Thyroid gland (tissue), 4 donors: ENCODE measurements at regions of chrX and their contacts with region 1.

Region 1: GRCh38 chrX:72540318-72540717 is 32.3 kb downstream of the HDAC8 start:
- DNase-seq: no peak
- H3K4me3 ChIP-seq: no peak overlapping the region
- H3K27ac ChIP-seq: no peak overlapping the region
- H3K4me1 ChIP-seq: peaks cover 0 to 10% of the 10 kb centered on the region in 2 donors
- H3K27me3 ChIP-seq: no peaks in the 10 kb centered on the region
- CTCF ChIP-seq: peak in 5 of 6 experiments; percentile 11 to 56 (median 34)
- POLR2A ChIP-seq: no peak

Region 2: GRCh38 chrX:72245461-72246089 is 294.7 kb before region 1 on chrX:
- intact Hi-C with region 1: loop called (anchors 10 kb)
- DNase-seq: peak; percentile 58 to 67
- H3K4me3 ChIP-seq: no peak overlapping the region
- H3K27ac ChIP-seq: no peak overlapping the region
- H3K4me1 ChIP-seq: peaks cover 6 to 9% of the 10 kb centered on the region in 2 donors
- H3K27me3 ChIP-seq: no peaks in the 10 kb centered on the region
- CTCF ChIP-seq: peak in 5 of 6 experiments; percentile 37 to 69 (median 64)
- POLR2A ChIP-seq: no peak

Region 3: GRCh38 chrX:72663737-72664136 is 123.4 kb after region 1 on chrX:
- intact Hi-C with region 1: no loop called
- DNase-seq: no peak
- H3K4me3 ChIP-seq: no peak overlapping the region
- H3K27ac ChIP-seq: no peak overlapping the region
- H3K4me1 ChIP-seq: no peaks in the 10 kb centered on the region
- H3K27me3 ChIP-seq: no peaks in the 10 kb centered on the region
- CTCF ChIP-seq: no peak
- POLR2A ChIP-seq: no peak